ENCODE measurements at regions of chr1 and their contacts with region 1.

Region 1: GRCh38 chr1:167220537-167221125 is at the start of gene POU2F1:
- DNase-seq: peak; percentile 96 to 100 (median 99)
- ATAC-seq: peak; percentile 82 to 86 (median 84)
- H3K4me3 ChIP-seq: peak within 1 kb of the TSS; percentile 88 to 98
- H3K4me3 Mint-ChIP-seq: peak within 1 kb of the TSS; percentile 83 to 94 (median 93)
- H3K27ac ChIP-seq: peak within 1 kb of the TSS; percentile 98
- H3K27ac Mint-ChIP-seq: peak within 1 kb of the TSS; percentile 97 to 98
- H3K4me1 ChIP-seq: peaks cover 12 to 19% of the 10 kb centered on the region in 2 experiments
- H3K4me1 Mint-ChIP-seq: peaks cover 34 to 42% (median 38%) of the 10 kb centered on the region in 3 donors
- H3K27me3 ChIP-seq: no peaks in the 10 kb centered on the region
- H3K27me3 Mint-ChIP-seq: no peaks in the 10 kb centered on the region
- total RNA-seq, gene POU2F1: 15.1 to 34.5 (median 22.6) TPM

Region 2: GRCh38 chr1:166083887-166084286 is 1136.7 kb before region 1 on chr1:
- CTCF ChIA-PET with region 1: no interaction called
- POLR2A ChIA-PET with region 1: no interaction called
- DNase-seq: peak in 1 of 35 experiments; percentile 5
- ATAC-seq: peak; percentile 40 to 66 (median 44)
- H3K4me3 ChIP-seq: no peak overlapping the region
- H3K4me3 Mint-ChIP-seq: no peak overlapping the region
- H3K27ac ChIP-seq: no peak overlapping the region
- H3K27ac Mint-ChIP-seq: peak overlapping the region; percentile 21 to 37
- H3K4me1 ChIP-seq: peaks cover 0 to 18% of the 10 kb centered on the region in 2 experiments
- H3K4me1 Mint-ChIP-seq: peaks cover 27 to 42% (median 42%) of the 10 kb centered on the region in 3 donors
- H3K27me3 ChIP-seq: peaks cover 0 to 2% of the 10 kb centered on the region in 2 experiments
- H3K27me3 Mint-ChIP-seq: peaks cover 3 to 6% of the 10 kb centered on the region in 2 donors

Region 3: DNA sequence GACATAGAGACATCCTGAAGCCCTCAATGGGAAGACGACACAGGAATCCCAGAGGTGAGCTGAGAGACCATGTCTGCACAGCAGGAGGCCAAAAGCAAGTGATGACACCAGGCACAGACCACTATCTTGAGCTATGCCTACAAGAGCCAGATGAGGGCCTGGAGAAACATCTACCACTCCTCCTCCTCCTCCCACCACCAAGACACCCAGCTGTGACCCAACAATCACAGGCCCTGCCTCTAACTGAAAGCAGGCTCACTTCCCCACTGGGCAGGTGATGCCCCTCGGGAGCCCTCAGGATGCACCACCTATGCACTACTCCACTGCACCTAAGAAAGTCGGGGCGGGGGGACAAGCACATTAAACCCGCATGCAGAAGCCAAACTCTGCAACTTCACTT is 361.0 kb before region 1 on chr1:
- CTCF ChIA-PET with region 1: no interaction called
- POLR2A ChIA-PET with region 1: no interaction called
- DNase-seq: no peak
- ATAC-seq: no peak
- H3K4me3 ChIP-seq: no peak overlapping the region
- H3K4me3 Mint-ChIP-seq: no peak overlapping the region
- H3K27ac ChIP-seq: no peak overlapping the region
- H3K27ac Mint-ChIP-seq: peak overlapping the region in 1 of 2 donors; percentile 65
- H3K4me1 ChIP-seq: no peaks in the 10 kb centered on the region
- H3K4me1 Mint-ChIP-seq: peaks cover 2 to 13% (median 4%) of the 10 kb centered on the region in 3 donors
- H3K27me3 ChIP-seq: no peaks in the 10 kb centered on the region
- H3K27me3 Mint-ChIP-seq: no peaks in the 10 kb centered on the region

Region 4: GRCh38 chr1:166875734-166876539 is 344.7 kb before region 1 on chr1 and contains the start of gene TADA1:
- CTCF ChIA-PET with region 1: interaction called in 1 of 2 experiments, 15 read pairs
- POLR2A ChIA-PET with region 1: interaction called, 4 to 7 read pairs
- DNase-seq: peak; percentile 93 to 100 (median 99)
- ATAC-seq: peak; percentile 91 to 94 (median 93)
- H3K4me3 ChIP-seq: peak within 1 kb of the TSS; percentile 71 to 75
- H3K4me3 Mint-ChIP-seq: peak within 1 kb of the TSS; percentile 89 to 98 (median 98)
- H3K27ac ChIP-seq: peak within 1 kb of the TSS; percentile 75
- H3K27ac Mint-ChIP-seq: peak within 1 kb of the TSS; percentile 98 to 99
- H3K4me1 ChIP-seq: peaks cover 13 to 16% of the 10 kb centered on the region in 2 experiments
- H3K4me1 Mint-ChIP-seq: peaks cover 43 to 53% (median 50%) of the 10 kb centered on the region in 3 donors
- H3K27me3 ChIP-seq: no peaks in the 10 kb centered on the region
- H3K27me3 Mint-ChIP-seq: no peaks in the 10 kb centered on the region
- total RNA-seq, gene TADA1: 11.1 to 14.6 (median 12.8) TPM

Region 5: GRCh38 chr1:166910396-166910994 is 310.1 kb before region 1 on chr1:
- CTCF ChIA-PET with region 1: interaction called, 4 to 16 read pairs
- POLR2A ChIA-PET with region 1: no interaction called
- DNase-seq: peak; percentile 40 to 92 (median 69)
- ATAC-seq: peak; percentile 99 to 100 (median 100)
- H3K4me3 ChIP-seq: no peak overlapping the region
- H3K4me3 Mint-ChIP-seq: no peak overlapping the region
- H3K27ac ChIP-seq: no peak overlapping the region
- H3K27ac Mint-ChIP-seq: no peak overlapping the region
- H3K4me1 ChIP-seq: no peaks in the 10 kb centered on the region
- H3K4me1 Mint-ChIP-seq: peaks cover 0 to 7% (median 6%) of the 10 kb centered on the region in 3 donors
- H3K27me3 ChIP-seq: peaks cover 0 to 3% of the 10 kb centered on the region in 2 experiments
- H3K27me3 Mint-ChIP-seq: no peaks in the 10 kb centered on the region

Region 6: GRCh38 chr1:167066333-167067122 is 154.1 kb before region 1 on chr1:
- CTCF ChIA-PET with region 1: interaction called in 1 of 2 experiments, 12 read pairs
- POLR2A ChIA-PET with region 1: no interaction called
- DNase-seq: peak; percentile 43 to 86 (median 71)
- ATAC-seq: peak; percentile 89 to 96 (median 94)
- H3K4me3 ChIP-seq: no peak overlapping the region
- H3K4me3 Mint-ChIP-seq: peak overlapping the region in 1 of 3 donors; percentile 22
- H3K27ac ChIP-seq: no peak overlapping the region
- H3K27ac Mint-ChIP-seq: no peak overlapping the region
- H3K4me1 ChIP-seq: peaks cover 0 to 9% of the 10 kb centered on the region in 2 experiments
- H3K4me1 Mint-ChIP-seq: peaks cover 0 to 2% (median 0%) of the 10 kb centered on the region in 3 donors
- H3K27me3 ChIP-seq: peaks cover 0 to 2% of the 10 kb centered on the region in 2 experiments
- H3K27me3 Mint-ChIP-seq: no peaks in the 10 kb centered on the region

Region 7: DNA sequence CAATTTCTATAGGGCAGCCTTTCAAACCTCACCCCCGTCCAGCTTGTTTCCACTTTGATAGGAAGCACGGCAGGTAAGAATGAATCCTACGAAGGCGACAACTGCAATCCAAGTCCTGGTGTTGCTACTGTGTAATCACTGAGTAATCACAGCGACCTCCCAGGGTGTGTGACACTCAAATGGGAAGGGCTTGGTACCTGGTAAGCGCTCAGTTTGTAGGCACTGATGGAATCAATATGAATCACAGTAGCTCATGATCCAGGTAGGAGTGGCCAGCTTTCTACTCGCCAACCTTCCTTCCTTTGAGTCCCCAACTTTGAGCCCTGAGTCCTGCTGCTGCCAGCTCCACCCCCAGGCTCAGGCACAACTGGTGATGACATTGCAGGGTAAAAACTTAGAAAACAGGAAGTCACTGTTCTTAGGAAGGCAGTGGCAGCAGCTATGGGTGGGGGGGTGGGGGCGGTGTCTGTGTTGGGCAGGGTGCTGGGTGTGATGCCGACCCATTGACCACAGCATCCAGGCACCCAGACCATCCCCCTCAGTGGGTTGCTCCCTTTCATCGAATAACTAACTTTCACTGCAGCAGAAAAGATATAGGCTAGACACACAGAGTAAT is 227.0 kb after region 1 on chr1:
- CTCF ChIA-PET with region 1: interaction called in 1 of 2 experiments, 16 read pairs
- POLR2A ChIA-PET with region 1: interaction called in 1 of 2 experiments, 3 read pairs
- DNase-seq: peak in 34 of 35 experiments; percentile 61 to 88 (median 70)
- ATAC-seq: peak; percentile 82 to 87 (median 82)
- H3K4me3 ChIP-seq: peak overlapping the region; percentile 7 to 25
- H3K4me3 Mint-ChIP-seq: peak overlapping the region; percentile 69 to 75 (median 75)
- H3K27ac ChIP-seq: peak overlapping the region; percentile 96
- H3K27ac Mint-ChIP-seq: peak overlapping the region; percentile 97 to 98
- H3K4me1 ChIP-seq: peaks cover 57 to 91% of the 10 kb centered on the region in 2 experiments
- H3K4me1 Mint-ChIP-seq: peaks cover 89 to 93% (median 92%) of the 10 kb centered on the region in 3 donors
- H3K27me3 ChIP-seq: no peaks in the 10 kb centered on the region
- H3K27me3 Mint-ChIP-seq: no peaks in the 10 kb centered on the region

Region 8: GRCh38 chr1:167474191-167474716 is 253.6 kb after region 1 on chr1:
- CTCF ChIA-PET with region 1: interaction called, 5 to 6 read pairs
- POLR2A ChIA-PET with region 1: interaction called in 1 of 2 experiments, 13 read pairs
- DNase-seq: peak in 31 of 35 experiments; percentile 40 to 77 (median 59)
- ATAC-seq: peak; percentile 76 to 87 (median 76)
- H3K4me3 ChIP-seq: peak overlapping the region; percentile 20 to 29
- H3K4me3 Mint-ChIP-seq: peak overlapping the region; percentile 60 to 81 (median 68)
- H3K27ac ChIP-seq: peak overlapping the region; percentile 81
- H3K27ac Mint-ChIP-seq: peak overlapping the region; percentile 89 to 92
- H3K4me1 ChIP-seq: peaks cover 67 to 72% of the 10 kb centered on the region in 2 experiments
- H3K4me1 Mint-ChIP-seq: peaks cover 89 to 92% (median 90%) of the 10 kb centered on the region in 3 donors
- H3K27me3 ChIP-seq: no peaks in the 10 kb centered on the region
- H3K27me3 Mint-ChIP-seq: no peaks in the 10 kb centered on the region

Region 9: DNA sequence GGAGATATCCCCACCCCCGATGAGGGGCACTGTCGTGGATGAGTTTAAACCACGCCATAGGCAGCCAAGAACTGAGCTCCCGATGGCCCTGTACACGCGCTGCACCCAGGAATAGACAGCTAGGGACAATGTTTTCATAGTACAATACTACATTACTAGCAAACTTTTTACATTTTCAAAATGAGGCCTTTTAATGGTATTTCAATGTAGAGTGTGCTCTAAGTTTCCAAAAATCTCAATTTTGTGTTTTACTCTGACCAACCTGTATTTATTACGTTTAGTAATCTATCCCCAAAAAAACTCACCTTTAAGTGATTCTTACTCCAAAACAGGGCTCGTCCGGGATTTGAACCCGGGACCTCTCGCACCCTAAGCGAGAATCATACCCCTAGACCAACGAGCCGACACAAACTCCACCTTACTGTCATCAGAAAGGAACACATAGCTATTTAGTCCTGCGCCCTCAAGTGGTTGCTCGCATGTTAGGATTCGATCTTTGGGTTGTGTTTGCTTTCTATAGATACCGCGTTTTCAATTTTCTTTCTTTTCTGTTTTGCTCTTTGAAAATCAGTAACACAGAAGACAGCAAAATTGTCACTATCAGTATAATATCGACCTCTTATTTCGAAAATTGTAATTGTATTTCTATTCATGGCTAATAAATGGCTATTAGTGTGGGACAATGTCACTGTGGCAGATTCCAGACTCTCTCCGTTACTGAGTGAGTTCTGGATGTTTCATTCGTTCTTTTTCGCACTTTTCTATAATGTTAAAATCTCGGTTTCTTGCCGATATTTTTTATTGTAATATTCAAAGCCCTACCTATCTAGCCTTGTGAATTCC is 494.7 kb after region 1 on chr1:
- CTCF ChIA-PET with region 1: interaction called in 1 of 2 experiments, 13 read pairs
- POLR2A ChIA-PET with region 1: interaction called, 9 to 10 read pairs
- DNase-seq: peak; percentile 70 to 94 (median 83)
- ATAC-seq: peak; percentile 58 to 64 (median 61)
- H3K4me3 ChIP-seq: peak overlapping the region; percentile 70 to 91
- H3K4me3 Mint-ChIP-seq: peak overlapping the region; percentile 82 to 87 (median 83)
- H3K27ac ChIP-seq: peak overlapping the region; percentile 39
- H3K27ac Mint-ChIP-seq: peak overlapping the region; percentile 79 to 91
- H3K4me1 ChIP-seq: peaks cover 15 to 30% of the 10 kb centered on the region in 2 experiments
- H3K4me1 Mint-ChIP-seq: peaks cover 43 to 48% (median 46%) of the 10 kb centered on the region in 3 donors
- H3K27me3 ChIP-seq: no peaks in the 10 kb centered on the region
- H3K27me3 Mint-ChIP-seq: peaks cover 0 to 6% of the 10 kb centered on the region in 2 donors